ENCODE measurements at regions of chr10 and their contacts with region 1.

Region 1: DNA sequence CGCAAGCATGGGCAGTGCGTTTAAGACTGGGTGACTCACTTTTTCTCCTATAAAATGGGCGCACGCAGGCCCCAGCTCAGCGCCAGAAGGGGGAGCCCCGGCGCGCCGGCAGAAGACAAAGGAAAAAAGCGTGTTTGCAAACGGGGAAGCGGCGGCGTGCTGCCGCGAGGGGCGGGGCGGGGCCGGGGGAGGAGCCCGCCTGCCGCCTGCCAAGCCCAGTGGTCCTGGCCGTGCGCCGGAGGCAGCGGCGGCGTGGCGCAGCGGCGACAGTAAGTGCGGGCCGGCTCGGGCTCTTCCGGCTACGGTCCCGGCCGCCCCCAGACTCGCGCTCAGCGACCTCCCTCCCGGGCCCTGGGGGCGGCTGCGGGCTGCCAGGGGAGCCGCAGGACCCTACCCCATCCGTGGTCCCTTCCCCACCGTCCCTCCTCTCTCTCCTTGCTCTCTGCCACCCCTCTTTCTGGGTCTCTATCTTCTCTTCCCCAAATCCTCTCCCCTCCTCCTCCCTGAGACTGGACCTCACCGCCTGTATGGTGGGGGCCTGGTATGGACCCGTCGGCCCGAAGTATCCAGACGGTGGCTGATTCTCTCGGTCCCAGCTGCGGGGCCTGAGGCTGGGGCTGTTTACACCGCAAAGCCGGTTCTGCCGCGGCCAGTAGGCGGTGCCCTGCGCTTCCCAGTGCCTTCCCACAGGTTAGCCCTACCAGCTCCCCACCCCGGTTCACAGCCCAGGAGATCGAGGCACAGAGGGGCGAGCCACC is at the start of gene SLC29A3:
- DNase-seq: peak; percentile 81
- H3K4me3 Mint-ChIP-seq: peak within 1 kb of the TSS; percentile 96
- H3K27ac Mint-ChIP-seq: peak within 1 kb of the TSS; percentile 83
- H3K4me1 Mint-ChIP-seq: peaks cover 23% of the 10 kb centered on the region
- H3K27me3 Mint-ChIP-seq: peaks cover 1% of the 10 kb centered on the region
- total RNA-seq, gene SLC29A3: 6.6 and 6.8 TPM in 2 replicates

Region 2: DNA sequence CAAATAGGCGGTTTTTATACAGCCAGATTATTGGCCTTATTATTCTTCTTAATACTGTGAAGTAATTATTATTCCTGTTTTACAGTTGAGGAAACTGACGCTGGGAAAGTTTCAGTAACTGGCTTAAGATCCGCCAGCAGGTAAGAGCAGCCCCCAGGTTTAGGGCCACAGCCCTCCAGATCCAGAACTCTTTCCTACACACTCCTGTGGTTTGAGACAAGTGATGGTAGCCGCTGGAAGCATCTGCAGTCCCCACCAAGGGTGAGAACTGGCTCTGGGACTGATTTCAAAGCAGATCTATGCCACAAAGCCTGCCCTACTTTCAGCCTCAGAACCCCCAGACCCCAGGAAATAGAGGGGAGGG is 109.9 kb before region 1 on chr10:
- intact Hi-C with region 1: no loop called
- DNase-seq: no peak
- H3K4me3 Mint-ChIP-seq: no peak overlapping the region
- H3K27ac Mint-ChIP-seq: no peak overlapping the region
- H3K4me1 Mint-ChIP-seq: no peaks in the 10 kb centered on the region
- H3K27me3 Mint-ChIP-seq: peaks cover 72% of the 10 kb centered on the region

Region 3: DNA sequence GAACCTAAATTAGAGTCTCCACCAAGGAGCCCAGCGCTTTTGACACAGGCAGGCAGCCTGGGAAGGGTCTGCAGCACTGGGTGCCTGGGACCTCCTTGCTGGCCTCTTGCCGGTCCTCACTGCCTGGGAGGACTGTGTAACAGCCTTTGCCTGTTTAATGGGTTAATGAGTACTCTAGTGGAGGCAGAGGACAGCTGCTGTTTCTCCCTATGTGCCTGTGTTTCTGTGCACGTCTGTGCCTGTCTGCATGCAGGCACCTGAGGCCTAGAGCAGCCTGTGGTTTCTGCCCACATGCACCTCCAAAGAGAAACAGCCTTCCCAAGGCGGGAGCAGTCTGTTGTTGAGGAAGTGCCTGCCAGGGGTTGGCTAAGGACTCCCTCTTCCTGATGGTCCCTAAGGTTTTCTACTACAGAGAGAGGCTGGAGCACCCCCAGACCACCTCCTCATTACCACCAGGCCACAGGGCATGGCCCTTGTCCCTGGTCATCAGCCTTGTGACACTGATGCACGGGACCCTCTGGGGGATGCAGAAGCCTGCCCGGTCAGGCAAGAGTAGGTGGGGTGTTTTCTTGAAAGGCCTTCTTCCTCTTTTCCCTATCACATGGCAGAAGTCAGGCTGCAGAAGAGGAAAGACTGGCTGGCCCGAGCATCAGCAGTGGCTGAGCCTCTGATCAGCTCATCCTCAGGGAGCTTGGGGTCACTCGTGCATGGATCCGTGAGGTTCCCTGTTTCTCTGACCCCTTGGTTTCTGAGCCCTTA is 14.1 kb after region 1 on chr10:
- intact Hi-C with region 1: no loop called
- DNase-seq: no peak
- H3K4me3 Mint-ChIP-seq: no peak overlapping the region
- H3K27ac Mint-ChIP-seq: no peak overlapping the region
- H3K4me1 Mint-ChIP-seq: no peaks in the 10 kb centered on the region
- H3K27me3 Mint-ChIP-seq: no peaks in the 10 kb centered on the region

Region 4: GRCh38 chr10:71372882-71373495 is 53.8 kb after region 1 on chr10:
- intact Hi-C with region 1: loop called (anchors 1 kb)
- DNase-seq: no peak
- H3K4me3 Mint-ChIP-seq: no peak overlapping the region
- H3K27ac Mint-ChIP-seq: no peak overlapping the region
- H3K4me1 Mint-ChIP-seq: peaks cover 14% of the 10 kb centered on the region
- H3K27me3 Mint-ChIP-seq: peaks cover 7% of the 10 kb centered on the region

Region 5: DNA sequence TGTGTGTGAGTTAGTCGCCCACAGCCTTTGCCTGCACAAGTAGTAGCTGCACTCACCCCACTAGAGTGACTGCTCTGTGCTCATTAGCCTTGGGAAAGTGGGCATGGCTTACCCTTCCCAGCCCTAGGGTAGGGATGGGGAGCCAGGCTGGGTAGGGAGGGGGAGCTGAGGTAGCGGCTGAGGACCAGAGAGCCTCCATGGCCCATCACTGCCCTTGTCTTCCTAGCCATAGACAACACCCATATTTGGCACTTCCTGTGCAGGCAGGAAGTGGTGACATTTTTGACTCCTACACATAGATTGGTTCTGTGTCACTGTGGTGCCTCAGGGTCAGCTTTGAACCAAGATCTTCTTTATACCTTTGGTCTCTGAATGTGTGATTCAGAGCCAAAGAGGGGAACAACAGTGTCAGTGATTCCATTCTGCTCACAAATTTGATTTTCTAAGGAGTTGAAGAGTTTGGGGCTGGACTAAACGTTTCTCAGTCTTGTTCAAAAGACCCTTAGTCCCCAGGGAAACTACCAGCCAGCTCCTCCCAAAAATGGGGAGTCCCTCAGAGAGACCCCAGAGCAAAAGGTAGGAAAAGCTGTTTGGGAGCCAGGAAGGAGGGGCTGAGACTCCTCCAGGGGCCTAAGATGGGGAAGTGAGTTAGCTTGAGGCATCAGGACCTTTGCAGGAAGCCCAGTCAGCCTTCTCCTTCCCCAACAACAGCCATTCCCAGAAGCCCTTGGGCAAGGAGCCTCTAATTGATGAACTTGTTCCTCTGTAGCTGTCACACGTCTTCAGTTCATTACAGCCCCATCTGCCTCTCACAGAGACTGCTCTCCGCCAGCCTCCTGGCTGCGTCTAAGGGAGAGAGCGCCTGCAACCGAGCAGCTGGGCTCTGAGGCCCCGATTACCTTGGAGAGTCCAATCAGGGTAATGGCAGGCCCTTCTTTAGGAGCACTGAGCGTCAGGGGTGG is 212.5 kb after region 1 on chr10:
- intact Hi-C with region 1: loop called (anchors 1 kb)
- DNase-seq: peak; percentile 3
- H3K4me3 Mint-ChIP-seq: no peak overlapping the region
- H3K27ac Mint-ChIP-seq: peak overlapping the region; percentile 87
- H3K4me1 Mint-ChIP-seq: peaks cover 11% of the 10 kb centered on the region
- H3K27me3 Mint-ChIP-seq: peaks cover 2% of the 10 kb centered on the region

Region 6: GRCh38 chr10:71812016-71812912 is 493.0 kb after region 1 on chr10:
- intact Hi-C with region 1: loop called (anchors 1 kb)
- DNase-seq: peak; percentile 54
- H3K4me3 Mint-ChIP-seq: no peak overlapping the region
- H3K27ac Mint-ChIP-seq: no peak overlapping the region
- H3K4me1 Mint-ChIP-seq: no peaks in the 10 kb centered on the region
- H3K27me3 Mint-ChIP-seq: no peaks in the 10 kb centered on the region

Region 7: DNA sequence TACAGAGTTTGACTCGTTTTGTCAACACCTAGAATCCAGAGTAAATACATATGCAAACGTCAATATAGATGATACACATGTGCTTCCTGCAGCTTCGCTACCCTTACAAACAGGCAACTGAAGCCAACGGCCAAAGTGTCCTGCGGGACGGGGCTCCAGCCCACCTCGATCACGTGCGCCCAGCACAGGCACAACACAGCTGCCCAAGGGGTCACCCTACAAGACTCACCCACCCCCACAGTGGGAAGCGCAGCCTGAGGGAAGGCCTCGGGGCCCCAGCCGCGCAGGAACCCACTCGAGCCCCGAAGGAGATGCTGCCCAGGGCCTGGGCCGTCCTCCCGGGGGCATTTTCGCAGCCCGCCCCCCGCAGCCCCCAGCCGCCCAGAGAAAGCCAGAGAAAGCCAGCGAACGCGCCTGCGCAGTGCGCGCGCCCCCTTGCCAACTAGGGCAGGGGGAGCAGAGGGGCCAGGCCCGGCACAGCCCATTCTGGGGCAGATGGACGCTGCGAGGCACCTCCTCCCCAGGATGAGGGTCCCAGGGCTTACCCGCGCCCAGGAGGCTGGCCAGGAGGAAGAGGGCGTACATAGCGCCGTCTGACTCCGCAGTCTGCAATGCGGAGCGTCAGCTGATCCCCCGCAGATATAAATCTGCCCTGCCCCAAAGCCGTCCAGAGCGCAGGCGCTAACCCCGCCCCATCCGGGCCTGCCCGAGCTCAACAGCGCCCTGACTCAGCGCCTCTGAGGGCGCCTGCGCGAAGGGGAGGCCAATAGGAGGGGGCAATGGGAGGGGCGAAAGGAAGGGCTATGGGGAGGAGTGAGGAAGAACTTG is 531.6 kb after region 1 on chr10 and contains the start of gene PSAP:
- intact Hi-C with region 1: loop called (anchors 1 kb)
- DNase-seq: peak; percentile 99
- H3K4me3 Mint-ChIP-seq: peak within 1 kb of the TSS; percentile 97
- H3K27ac Mint-ChIP-seq: peak within 1 kb of the TSS; percentile 85
- H3K4me1 Mint-ChIP-seq: peaks cover 42% of the 10 kb centered on the region
- H3K27me3 Mint-ChIP-seq: no peaks in the 10 kb centered on the region
- total RNA-seq, gene PSAP: 117 and 122 TPM in 2 replicates

Region 8: DNA sequence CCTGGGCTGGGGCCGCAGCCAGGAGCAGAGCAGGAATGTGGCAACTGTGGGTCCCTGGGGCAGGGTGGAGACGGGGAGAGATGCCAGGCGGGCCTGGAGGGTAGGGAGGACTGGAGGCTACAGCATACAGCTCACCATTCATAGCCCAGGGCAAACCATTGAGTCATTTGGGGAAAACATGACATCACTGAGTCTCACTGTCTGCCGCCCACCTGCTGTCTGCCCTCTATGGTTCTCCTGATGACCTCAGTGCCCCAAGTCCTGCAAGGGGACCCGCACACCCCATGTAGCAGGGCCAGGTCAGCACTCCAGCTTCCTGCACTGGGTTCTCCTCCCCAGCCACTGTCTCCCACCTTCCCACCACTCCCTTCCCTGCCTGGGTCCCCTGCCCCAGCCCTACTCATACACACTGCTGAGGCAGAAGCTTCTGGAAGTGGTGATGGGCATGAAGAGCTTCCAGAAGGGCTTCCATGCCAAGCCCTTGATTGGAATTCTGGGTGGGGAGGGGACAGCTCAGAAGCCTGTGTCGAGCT is 655.3 kb after region 1 on chr10:
- intact Hi-C with region 1: no loop called
- DNase-seq: no peak
- H3K4me3 Mint-ChIP-seq: no peak overlapping the region
- H3K27ac Mint-ChIP-seq: no peak overlapping the region
- H3K4me1 Mint-ChIP-seq: peaks cover 13% of the 10 kb centered on the region
- H3K27me3 Mint-ChIP-seq: no peaks in the 10 kb centered on the region